Right ventricle myocardium superior (tissue), 1 donor: ENCODE measurements at regions of chr10 and their contacts with region 1.

Region 1: GRCh38 chr10:5014936-5015335 is 11.3 kb upstream of the AKR1C2 start:
- DNase-seq: no peak
- ATAC-seq: no peak

Region 2: DNA sequence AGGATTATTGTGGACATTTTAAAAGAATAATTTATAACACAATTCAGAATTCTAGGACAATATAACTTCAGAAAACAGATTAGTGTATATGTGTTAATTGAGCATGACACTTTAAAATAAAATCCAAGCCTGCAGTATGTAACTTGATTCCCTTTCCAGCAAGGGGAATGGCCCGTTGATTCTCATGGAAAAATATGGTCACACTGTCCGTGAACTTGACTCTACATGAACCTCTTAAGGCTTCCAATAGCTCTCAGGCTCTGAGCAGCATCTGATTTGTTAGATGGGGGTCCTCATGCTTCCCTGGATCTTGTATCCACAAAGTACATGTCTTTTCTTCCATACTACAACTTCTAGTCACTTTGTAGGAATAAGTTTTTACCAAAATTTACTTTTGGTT is 274.5 kb before region 1 on chr10:
- intact Hi-C with region 1: no loop called
- DNase-seq: no peak
- ATAC-seq: no peak

Region 3: DNA sequence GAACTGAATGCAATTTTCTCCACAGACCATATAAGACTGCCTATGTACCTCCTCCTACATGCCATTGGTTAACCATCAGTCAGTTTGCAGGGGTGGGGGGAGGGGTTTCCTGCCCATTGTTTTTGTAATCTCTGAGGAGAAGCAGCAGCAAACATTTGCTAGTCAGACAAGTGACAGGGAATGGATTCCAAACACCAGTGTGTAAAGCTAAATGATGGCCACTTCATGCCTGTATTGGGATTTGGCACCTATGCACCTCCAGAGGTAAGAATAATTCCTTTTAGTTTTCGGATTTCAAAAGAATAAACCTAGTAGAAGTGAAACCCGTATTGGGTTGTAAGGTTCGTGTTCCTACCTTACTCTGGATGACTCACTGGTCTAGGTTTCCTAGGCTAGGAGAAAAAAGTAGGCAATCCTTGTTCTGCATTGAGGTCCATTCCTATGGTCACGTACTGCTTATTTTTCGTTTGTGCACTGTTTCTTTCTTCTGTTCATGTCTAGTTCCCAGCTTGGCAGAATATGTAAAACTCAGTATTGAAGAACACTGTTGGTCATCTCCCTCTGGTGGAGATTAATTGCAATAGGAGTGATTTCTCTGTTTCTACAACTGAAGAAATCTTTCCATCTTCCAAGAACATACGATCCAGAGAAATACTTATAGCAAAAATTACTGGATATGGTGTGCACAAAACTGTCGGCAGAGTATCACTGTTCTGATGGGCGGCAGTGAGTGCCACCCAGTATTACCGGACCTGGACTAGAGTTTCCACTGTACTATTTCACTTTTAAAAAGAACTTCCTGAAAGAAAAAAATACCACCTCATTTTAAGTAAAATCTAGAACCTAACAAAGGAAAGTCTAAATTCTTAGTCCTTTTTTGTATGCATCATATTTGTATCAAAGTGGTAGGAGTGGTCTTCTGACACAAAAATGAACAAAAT is 79.6 kb after region 1 on chr10 and contains the start of gene AKR1C3:
- intact Hi-C with region 1: loop called (anchors 10 kb)
- DNase-seq: no peak
- ATAC-seq: peak; percentile 92
- total RNA-seq, gene AKR1C3: 30.3 TPM